ENCODE measurements at regions of chr17 and their contacts with region 1.

Region 1: DNA sequence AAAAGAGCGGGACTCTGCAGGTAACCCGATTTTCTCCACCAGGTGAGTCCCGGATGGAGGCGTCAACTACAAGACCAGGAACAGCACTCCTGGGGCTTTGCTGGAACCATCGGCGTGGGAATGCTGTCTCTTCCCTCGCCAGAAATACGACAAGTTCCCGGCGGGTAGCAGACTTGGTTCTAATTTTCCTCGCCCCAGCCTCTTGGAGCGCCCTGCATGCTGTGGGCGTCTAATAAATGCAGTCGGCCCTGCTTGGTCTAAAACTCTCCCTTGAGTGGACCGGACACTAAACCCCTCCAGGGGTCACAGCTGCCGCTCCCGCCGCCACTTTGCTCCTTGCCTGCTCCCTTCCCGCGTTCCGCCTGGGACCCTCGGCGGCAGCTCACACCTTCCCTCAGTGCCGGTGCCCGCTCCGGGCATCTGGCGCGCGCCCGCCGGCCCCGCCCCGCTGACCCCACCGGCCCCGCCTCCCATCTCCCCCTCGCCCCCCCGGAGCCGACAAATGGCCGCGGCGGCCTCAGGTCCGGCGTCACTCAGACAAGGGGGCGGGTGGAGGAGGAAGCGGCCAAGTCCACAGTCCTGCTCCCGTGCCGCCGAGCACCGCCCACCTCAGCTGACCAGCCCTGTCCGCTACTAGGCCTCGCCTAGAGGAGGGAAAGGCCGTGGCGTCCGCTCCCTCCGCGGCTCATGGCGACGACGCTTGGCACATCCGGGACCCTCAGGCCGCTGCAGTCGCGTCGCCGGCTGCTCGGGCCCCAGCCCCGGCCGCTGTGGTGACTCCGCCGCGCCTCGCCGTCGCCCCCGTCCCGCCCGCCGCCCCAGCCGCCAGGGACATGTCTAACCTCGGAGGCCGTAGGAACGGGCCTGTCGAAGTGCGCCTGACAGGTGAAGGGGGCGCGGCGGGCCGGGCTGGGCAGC is 65.8 kb downstream of the KPNA2 start:
- DNase-seq: peak; percentile 97
- H3K4me3 ChIP-seq: peak overlapping the region; percentile 62 to 93 (median 87)
- H3K27ac ChIP-seq: peak overlapping the region; percentile 90 to 95 (median 92)
- H3K4me1 ChIP-seq: peaks cover 0 to 22% (median 11%) of the 10 kb centered on the region in 4 donors
- H3K27me3 ChIP-seq: no peaks in the 10 kb centered on the region
- CTCF ChIP-seq: no peak
- EP300 ChIP-seq: no peak
- POLR2A ChIP-seq: peak; percentile 28 to 56

Region 2: DNA sequence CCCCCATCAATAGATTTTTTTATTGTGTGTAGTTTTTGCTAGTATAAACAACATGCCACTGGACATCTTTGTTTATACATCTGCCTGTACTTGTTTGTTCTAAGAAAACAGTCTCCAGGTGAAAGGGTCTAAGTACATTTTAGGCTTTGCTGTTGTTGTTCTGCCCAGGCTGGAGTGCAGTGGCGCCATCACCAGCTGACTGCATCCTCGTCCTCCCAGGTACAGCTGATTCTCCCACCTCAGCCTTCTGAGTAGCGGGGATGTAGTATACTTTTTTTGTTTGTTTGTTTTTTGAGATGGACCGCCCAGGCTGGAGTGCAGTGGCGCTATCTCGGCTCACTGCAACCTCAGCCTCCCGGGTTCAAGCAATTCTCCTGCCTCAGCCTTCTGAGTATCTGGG is 130.5 kb before region 1 on chr17:
- intact Hi-C with region 1: no loop called
- DNase-seq: no peak
- H3K4me3 ChIP-seq: no peak overlapping the region
- H3K27ac ChIP-seq: no peak overlapping the region
- H3K4me1 ChIP-seq: no peaks in the 10 kb centered on the region
- H3K27me3 ChIP-seq: no peaks in the 10 kb centered on the region
- CTCF ChIP-seq: no peak
- EP300 ChIP-seq: no peak
- POLR2A ChIP-seq: no peak

Region 3: DNA sequence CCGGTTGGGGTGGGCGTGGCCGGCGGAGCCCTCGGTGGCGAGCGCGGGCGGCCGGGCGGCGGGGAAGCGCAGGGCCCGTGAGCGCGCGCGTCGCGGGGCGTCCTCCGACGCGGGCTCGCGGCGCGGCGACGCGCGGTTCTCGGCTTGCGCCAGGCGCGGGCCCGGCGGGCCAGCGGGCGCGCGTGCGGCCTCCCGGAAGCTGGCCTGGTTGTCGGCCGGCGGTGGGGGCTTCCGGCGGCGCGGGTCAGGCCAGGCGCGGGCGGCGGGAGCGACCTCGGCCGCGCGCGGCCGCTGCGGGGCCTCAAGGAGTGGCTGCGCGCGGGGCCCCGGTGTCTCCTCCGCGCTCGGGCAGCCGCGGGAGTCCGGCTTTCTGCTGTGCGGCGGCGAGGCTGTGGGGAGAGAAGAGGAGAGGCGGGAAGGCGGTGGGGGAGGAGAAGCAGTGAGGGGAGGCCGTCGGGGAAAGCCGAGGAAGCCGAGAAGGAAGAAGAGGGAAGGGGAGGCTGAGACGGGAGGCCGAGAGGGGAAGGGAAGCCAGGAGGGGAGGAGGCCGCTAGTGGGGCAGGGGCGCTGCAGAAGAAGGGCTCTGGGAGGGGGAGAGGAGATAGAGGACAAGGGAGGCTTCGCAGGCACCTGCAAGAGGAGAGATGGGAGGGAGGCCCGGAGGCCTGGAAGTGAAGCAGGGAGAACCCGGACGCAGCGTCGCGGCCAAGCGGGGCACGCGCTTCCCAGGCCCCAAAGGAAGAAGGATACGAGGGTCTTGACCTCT is 107.6 kb before region 1 on chr17:
- intact Hi-C with region 1: loop called (anchors 1 kb)
- DNase-seq: peak; percentile 90
- H3K4me3 ChIP-seq: peak overlapping the region; percentile 64 to 78 (median 70)
- H3K27ac ChIP-seq: peak overlapping the region; percentile 94 to 96 (median 96)
- H3K4me1 ChIP-seq: peaks cover 0 to 33% (median 23%) of the 10 kb centered on the region in 4 donors
- H3K27me3 ChIP-seq: no peaks in the 10 kb centered on the region
- CTCF ChIP-seq: no peak
- EP300 ChIP-seq: no peak
- POLR2A ChIP-seq: peak in 1 of 2 donors; percentile 41

Region 4: DNA sequence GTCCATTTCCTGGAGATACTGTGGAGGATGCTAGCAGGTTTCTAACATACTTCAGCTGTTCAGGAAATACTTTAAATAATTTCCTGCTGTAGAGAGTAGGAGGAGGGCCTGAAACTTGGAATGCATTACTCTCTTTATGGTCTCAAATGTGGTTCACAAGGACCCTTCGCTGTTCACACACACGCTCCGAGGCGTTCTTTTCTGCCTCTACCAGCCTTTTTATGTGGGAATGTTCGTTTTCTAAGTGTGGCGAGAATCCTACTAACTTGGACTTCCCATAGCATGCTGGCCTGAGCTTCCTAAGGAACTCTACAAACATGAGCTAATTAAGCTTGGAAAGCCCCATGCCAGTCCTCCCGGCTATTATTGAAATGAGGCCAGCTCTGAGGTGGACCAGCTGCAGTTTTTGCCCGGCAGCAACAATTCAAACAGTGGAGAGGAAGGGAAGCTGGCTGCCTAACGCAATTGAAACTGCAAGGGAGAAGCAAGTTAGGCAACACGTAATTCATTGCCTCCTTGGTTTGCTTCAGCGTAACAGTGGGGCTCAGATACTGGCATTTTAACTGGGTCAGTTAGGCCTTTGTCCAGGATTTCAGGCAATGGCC is 46.9 kb before region 1 on chr17:
- intact Hi-C with region 1: no loop called
- DNase-seq: no peak
- H3K4me3 ChIP-seq: no peak overlapping the region
- H3K27ac ChIP-seq: peak overlapping the region; percentile 47 to 72 (median 57)
- H3K4me1 ChIP-seq: peaks cover 0 to 11% (median 6%) of the 10 kb centered on the region in 4 donors
- H3K27me3 ChIP-seq: no peaks in the 10 kb centered on the region
- CTCF ChIP-seq: no peak
- EP300 ChIP-seq: no peak
- POLR2A ChIP-seq: no peak

Region 5: GRCh38 chr17:68152161-68152571 is 50.8 kb after region 1 on chr17:
- intact Hi-C with region 1: no loop called
- DNase-seq: no peak
- H3K4me3 ChIP-seq: no peak overlapping the region
- H3K27ac ChIP-seq: no peak overlapping the region
- H3K4me1 ChIP-seq: no peaks in the 10 kb centered on the region
- H3K27me3 ChIP-seq: no peaks in the 10 kb centered on the region
- CTCF ChIP-seq: no peak
- EP300 ChIP-seq: no peak
- POLR2A ChIP-seq: no peak

Measured in sigmoid colon (tissue), 7 donors.